ENCODE measurements at regions of chr13 and their contacts with region 1.

Region 1: DNA sequence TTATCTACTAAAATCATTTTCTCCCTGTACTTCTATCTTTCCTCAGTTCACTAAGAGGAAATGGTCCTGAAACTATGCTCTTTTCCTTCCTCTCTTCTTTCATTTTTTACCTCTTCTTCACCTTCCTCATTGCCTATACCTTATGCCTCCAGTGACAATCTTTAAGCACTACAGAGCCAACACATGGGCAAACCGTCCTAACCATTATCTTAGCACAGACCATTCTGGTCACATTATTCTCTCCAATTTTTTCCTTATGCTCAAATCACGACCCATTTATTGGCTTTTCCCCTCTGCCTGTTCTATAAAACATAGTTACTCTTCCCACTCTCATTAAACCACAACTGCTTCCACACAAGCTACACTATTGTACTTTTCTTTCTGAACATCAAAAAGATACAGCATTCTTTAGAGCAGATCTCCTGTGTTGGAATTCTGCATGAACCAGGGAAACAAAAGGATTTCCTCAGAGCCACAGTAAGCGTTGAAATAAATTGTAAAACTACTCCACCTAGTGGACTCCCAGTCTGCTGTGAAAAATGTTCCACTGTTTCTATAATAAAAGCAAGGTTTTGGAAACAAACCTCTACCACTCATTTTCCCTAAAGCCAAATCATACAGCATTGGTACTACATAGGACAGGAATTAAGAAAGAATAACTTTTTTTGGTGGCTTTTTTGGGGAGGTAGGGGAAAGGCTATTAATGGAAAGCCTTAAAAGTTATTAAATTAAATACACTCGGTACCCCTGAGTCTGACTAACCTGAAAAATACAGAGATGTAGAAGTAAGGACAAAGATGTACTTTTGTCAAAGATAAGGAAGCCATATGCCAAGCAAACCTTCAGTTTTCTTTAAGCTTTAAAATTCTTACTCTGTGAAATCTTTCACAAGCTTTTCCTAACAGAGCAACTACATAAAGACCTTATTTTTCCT is 19.5 kb downstream of the NUFIP1 start:
- DNase-seq: peak; percentile 36 to 48 (median 39)
- H3K4me3 ChIP-seq: no peak overlapping the region
- H3K27ac ChIP-seq: no peak overlapping the region
- H3K4me1 ChIP-seq: peaks cover 0 to 18% (median 14%) of the 10 kb centered on the region in 4 experiments
- H3K27me3 ChIP-seq: no peaks in the 10 kb centered on the region

Region 2: GRCh38 chr13:44484562-44485138 is 485.2 kb before region 1 on chr13:
- CTCF ChIA-PET with region 1: interaction called, 85 read pairs
- POLR2A ChIA-PET with region 1: no interaction called
- DNase-seq: peak; percentile 25 to 51 (median 50)
- H3K4me3 ChIP-seq: peak overlapping the region in 4 of 7 experiments; percentile 37 to 79 (median 64)
- H3K27ac ChIP-seq: peak overlapping the region; percentile 67 to 82
- H3K4me1 ChIP-seq: peaks cover 0 to 26% (median 13%) of the 10 kb centered on the region in 4 experiments
- H3K27me3 ChIP-seq: no peaks in the 10 kb centered on the region

Region 3: GRCh38 chr13:45179428-45179827 is 209.6 kb after region 1 on chr13:
- CTCF ChIA-PET with region 1: no interaction called
- POLR2A ChIA-PET with region 1: no interaction called
- DNase-seq: no peak
- H3K4me3 ChIP-seq: no peak overlapping the region
- H3K27ac ChIP-seq: no peak overlapping the region
- H3K4me1 ChIP-seq: no peaks in the 10 kb centered on the region
- H3K27me3 ChIP-seq: no peaks in the 10 kb centered on the region